ENCODE measurements at regions of chr6 and their contacts with region 1.

Region 1: DNA sequence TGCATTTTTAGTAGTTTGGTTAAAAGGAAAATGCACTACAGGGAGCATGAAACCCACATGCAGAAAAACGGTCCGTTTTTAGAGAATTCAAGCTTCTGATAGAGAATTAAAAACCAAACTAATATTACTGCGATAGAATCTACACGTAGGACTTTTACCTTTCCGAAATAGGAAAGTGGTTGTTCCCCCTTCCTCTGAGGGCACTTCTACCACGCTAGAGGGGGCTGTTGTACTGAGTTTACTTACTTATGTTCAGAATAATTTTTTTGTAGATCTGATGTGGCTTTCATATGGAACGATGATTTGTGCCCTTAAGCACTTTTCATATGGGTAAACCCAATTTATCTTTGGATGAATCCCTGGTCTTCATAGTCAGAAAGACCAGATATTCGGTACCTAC is 264.3 kb upstream of the PLN start:
- DNase-seq: no peak
- ATAC-seq: no peak
- H3K4me3 ChIP-seq: no peak overlapping the region
- H3K27ac ChIP-seq: no peak overlapping the region
- H3K4me1 ChIP-seq: no peaks in the 10 kb centered on the region
- H3K27me3 ChIP-seq: 0 out of 2 replicates have a peak, but pooled peaks cover 3% of the 10 kb centered on the region
- CTCF ChIP-seq: peak; percentile 74; the same call in 1 of the 2 replicates

Region 2: GRCh38 chr6:118509009-118509617 is 225.3 kb after region 1 on chr6:
- CTCF ChIA-PET with region 1: no interaction called
- POLR2A ChIA-PET with region 1: no interaction called
- in situ Hi-C with region 1: no loop called
- intact Hi-C with region 1: loop called (anchors 2 kb)
- DNase-seq: peak; percentile 32
- ATAC-seq: no peak; the same call in 1 of the 2 replicates
- H3K4me3 ChIP-seq: no peak overlapping the region
- H3K27ac ChIP-seq: no peak overlapping the region
- H3K4me1 ChIP-seq: no peaks in the 10 kb centered on the region
- H3K27me3 ChIP-seq: no peaks in the 10 kb centered on the region
- CTCF ChIP-seq: peak; percentile 87; the same call in 1 of the 2 replicates

Region 3: GRCh38 chr6:118551063-118552053 is 267.6 kb after region 1 on chr6:
- CTCF ChIA-PET with region 1: no interaction called
- POLR2A ChIA-PET with region 1: no interaction called
- in situ Hi-C with region 1: no loop called
- intact Hi-C with region 1: loop called (anchors 1 kb)
- DNase-seq: peak; percentile 30
- ATAC-seq: peak; percentile 81
- H3K4me3 ChIP-seq: no peak overlapping the region
- H3K27ac ChIP-seq: no peak overlapping the region
- H3K4me1 ChIP-seq: no peaks in the 10 kb centered on the region
- H3K27me3 ChIP-seq: no peaks in the 10 kb centered on the region
- CTCF ChIP-seq: peak; percentile 75; the same call in 1 of the 2 replicates

Region 4: DNA sequence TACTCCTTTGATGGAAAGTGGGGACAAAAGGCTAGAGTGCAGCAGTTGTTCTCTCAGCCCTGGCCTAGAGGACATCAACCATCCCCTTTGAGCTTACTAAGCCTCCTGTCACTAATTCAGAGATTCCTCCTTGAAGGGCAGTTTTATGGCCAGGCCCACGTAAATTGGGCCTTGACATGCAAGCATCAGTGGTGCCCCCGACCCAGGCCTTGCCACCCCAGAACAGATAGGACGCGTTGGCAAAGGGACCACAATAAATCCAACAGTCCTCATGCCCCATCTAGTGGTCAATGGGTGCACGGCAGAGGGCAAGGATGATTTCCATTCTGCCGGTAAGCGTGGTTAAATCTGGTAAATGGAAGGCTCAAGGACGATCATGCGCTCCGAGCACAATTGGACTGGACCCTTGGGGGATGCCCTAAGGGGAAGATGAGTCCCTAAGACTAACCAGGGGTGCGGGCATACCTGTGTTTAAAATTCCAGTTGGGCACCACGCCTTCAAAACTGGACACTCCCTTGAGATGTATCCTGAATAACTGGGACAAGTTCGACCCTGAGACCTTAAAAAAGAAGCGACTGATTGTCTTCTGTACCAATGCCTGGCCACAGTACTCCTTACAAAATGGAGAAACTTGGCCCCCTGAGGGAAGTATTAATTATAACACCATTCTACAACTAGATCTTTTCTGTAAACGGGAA is 335.1 kb after region 1 on chr6:
- CTCF ChIA-PET with region 1: interaction called, 3 read pairs
- POLR2A ChIA-PET with region 1: no interaction called
- in situ Hi-C with region 1: no loop called
- intact Hi-C with region 1: loop called (anchors 2 kb)
- DNase-seq: peak; percentile 63
- ATAC-seq: peak; percentile 92
- H3K4me3 ChIP-seq: peak overlapping the region in 1 of 2 experiments; percentile 12; a peak in 1 of 4 replicates
- H3K27ac ChIP-seq: no peak overlapping the region
- H3K4me1 ChIP-seq: no peaks in the 10 kb centered on the region
- H3K27me3 ChIP-seq: no peaks in the 10 kb centered on the region
- CTCF ChIP-seq: peak; percentile 97

Region 5: DNA sequence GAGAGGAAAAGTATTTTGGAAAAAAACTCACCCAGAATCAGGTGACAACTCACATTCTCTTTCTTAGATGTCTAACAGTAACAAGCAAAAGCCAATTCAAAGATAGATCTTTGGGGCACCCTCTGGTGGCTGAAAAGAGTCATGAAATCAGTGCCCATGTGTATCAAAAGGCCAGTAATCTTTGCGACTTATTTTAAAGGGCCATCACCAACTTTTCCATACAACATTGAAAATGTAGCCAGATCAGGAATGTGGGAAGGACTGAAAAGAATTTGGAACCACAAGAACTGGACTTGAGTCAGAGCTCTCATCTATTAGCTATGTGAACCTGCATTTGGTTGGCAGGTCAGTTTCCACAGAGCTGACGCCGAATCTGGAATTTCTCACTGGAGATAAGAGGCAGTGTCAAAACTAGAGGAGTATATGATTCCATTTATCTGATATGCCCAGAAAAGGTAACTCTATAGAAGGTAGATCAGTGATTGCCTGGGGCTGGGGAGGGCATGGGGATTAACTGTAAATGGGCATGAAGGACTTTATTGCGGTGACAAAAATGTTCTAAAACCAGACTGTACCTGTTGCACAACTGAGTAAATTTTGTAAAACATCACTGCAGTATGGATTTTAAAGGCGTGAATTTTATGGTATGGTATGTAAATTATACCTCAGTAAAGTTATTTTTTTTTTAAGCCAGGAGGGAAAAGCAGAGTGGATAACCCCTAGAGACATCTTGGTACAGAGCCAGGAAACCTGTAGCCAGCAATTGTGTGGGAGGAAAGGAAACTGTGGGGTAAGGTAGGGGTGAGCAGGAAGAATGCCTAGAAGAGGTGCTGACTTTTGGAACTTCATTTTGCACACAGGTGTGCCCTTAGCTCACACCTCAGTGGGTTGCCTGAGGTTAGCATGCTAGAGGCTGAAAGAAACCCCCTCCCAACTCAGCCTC is 493.1 kb after region 1 on chr6:
- CTCF ChIA-PET with region 1: no interaction called
- POLR2A ChIA-PET with region 1: no interaction called
- in situ Hi-C with region 1: no loop called
- intact Hi-C with region 1: loop called (anchors 2 kb)
- DNase-seq: peak; percentile 75
- ATAC-seq: peak; percentile 88
- H3K4me3 ChIP-seq: no peak overlapping the region
- H3K27ac ChIP-seq: no peak overlapping the region
- H3K4me1 ChIP-seq: no peaks in the 10 kb centered on the region
- H3K27me3 ChIP-seq: peaks cover 8% of the 10 kb centered on the region; the same call in 1 of the 2 replicates
- CTCF ChIP-seq: peak; percentile 86

Region 6: DNA sequence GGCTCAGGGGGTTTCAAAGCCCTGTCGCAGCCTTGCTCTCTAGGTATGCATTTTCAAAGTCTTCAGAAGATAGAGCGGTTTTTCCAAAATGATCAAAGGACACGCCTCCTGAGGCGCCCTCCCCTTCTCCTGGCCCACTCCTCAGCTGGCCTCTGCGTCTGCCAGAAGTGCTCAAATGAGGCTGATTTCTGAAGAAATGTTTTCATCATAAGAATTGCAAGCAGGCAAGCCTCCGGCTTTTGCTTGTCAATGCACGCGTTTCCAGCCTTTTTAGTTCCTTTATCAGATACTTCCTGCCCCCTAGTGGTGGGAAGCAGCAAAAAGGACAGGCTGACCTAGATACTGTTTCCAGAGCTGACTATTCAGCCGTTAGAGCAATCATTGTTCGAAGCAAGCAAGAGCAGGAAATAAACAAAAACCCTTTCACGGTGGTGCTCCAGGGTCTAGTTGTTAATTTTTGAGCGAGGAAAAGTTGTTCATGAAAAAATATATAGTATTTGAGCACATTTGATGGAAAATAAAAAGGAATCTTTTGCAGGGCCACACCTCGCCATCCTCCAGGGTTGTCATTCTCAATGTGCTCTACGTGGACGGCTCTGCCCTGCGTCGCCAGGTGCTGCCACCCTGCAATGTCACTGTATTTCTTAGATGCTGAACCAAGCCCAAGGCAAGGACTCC is 516.8 kb after region 1 on chr6:
- CTCF ChIA-PET with region 1: no interaction called
- POLR2A ChIA-PET with region 1: no interaction called
- in situ Hi-C with region 1: no loop called
- intact Hi-C with region 1: loop called (anchors 5 kb)
- DNase-seq: peak; percentile 71
- ATAC-seq: peak; percentile 97
- H3K4me3 ChIP-seq: peak overlapping the region; percentile 7 to 36; a peak in 2 of 4 replicates
- H3K27ac ChIP-seq: no peak overlapping the region
- H3K4me1 ChIP-seq: no peaks in the 10 kb centered on the region
- H3K27me3 ChIP-seq: no peaks in the 10 kb centered on the region
- CTCF ChIP-seq: peak; percentile 96